ENCODE measurements at regions of chr11 and their contacts with region 1.

Region 1: DNA sequence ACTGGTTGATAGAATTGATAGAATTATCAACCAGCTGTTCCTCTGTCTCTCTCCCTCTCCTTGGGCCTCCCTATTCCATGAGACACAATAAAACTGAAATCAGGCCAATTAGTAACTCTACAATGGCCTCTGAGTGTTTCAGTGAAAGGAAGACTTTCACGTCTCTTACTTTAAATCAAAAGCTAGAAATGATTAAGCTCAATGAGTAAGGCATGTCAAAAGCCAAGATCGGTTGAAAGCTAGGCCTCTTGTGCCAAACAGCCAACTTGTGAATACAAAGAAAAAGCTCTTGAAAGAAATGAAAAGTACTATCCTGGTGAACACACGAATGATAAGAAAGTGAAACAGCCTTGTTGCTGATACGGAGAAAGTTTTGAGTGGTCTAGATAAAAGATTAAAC is 16.6 kb downstream of the PIH1D2 start:
- DNase-seq: no peak
- H3K4me3 ChIP-seq: no peak overlapping the region
- CTCF ChIP-seq: no peak

Region 2: GRCh38 chr11:112024773-112025678 is 32.1 kb before region 1 on chr11 and contains the start of gene DLAT:
- in situ Hi-C with region 1: loop called (anchors 5 kb)
- DNase-seq: peak; percentile 23
- H3K4me3 ChIP-seq: peak within 1 kb of the TSS; percentile 62
- CTCF ChIP-seq: no peak

Region 3: DNA sequence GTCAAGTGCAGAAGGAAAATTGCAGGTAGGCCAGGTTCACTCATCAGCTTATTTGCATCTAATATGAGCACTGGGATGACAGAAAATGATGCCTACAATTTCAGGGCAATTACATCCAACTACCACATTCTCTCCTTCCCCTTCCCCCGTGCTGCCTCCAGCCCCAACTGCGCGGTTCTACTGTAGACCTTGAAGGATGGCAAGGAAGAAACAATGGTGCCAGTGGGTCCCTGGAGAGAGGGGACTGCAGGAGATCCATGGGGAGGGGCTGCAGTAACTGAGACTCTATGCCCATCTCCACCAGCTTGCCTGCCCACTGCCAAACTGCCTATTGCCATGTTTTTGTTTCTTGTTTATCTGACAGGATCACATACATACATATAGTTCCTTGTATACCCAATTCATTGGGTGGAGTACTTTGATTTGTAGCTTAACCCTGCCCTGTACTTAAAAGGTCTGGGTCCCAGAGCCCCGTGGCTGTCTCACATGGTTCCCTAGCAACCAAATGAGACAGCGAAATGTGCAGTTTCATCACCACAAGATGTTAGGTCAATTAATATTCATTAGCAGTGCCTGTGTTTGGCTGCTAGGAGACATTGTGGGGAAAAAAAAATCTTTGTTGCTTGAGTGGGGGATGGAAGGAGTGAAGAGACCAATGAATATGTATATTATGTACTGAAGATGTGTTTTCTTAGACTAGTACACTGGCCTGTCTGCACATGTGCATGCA is 457.0 kb after region 1 on chr11:
- in situ Hi-C with region 1: no loop called
- DNase-seq: no peak
- H3K4me3 ChIP-seq: no peak overlapping the region
- CTCF ChIP-seq: no peak